ENCODE measurements at regions of chr15 and their contacts with region 1.

Region 1: GRCh38 chr15:35444557-35445204 is 101.3 kb downstream of the DPH6 start:
- DNase-seq: peak; percentile 26
- ATAC-seq: no peak
- H3K4me3 ChIP-seq: no peak overlapping the region
- H3K4me3 Mint-ChIP-seq: no peak overlapping the region
- H3K27ac ChIP-seq: no peak overlapping the region
- H3K27ac Mint-ChIP-seq: no peak overlapping the region
- H3K4me1 ChIP-seq: no peaks in the 10 kb centered on the region
- H3K4me1 Mint-ChIP-seq: no peaks in the 10 kb centered on the region
- H3K27me3 ChIP-seq: no peaks in the 10 kb centered on the region
- H3K27me3 Mint-ChIP-seq: no peaks in the 10 kb centered on the region
- CTCF ChIP-seq: peak; percentile 81

Region 2: DNA sequence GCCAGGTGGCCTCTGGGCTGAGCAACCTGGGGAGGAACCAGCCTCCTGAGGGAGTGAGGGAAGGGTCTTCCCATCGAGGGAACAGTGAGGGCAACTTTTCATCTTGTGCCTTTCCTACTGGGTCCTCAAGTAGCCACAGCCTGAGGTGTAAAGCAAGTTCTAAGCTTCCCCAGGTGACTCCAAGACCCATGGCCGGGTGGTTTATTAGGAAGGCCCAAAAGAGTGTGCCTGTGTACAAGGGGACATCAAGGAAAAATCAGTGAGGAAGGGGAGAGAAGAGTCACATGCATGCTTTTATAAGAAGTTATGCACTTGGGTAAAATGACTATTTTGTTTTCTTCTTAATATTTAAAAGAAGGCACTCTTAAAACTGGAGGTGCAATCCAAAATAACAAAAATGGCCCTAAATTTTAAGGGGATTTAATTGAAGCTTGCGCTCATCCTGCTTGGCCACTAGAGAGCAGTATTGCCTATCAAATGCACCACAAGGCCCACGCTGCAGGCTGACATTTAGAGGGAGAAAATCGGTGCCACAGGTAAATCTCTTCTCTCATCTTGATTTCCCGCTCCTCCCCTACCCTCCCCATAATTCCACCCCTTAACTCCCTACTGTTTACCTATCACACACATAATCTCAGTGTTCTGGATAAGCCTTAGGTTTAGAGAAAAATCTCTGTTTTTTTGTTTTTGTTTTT is 366.3 kb before region 1 on chr15:
- CTCF ChIA-PET with region 1: interaction called, 23 read pairs
- POLR2A ChIA-PET with region 1: no interaction called
- intact Hi-C with region 1: no loop called
- DNase-seq: peak; percentile 32
- ATAC-seq: no peak
- H3K4me3 ChIP-seq: no peak overlapping the region
- H3K4me3 Mint-ChIP-seq: no peak overlapping the region
- H3K27ac ChIP-seq: no peak overlapping the region
- H3K27ac Mint-ChIP-seq: no peak overlapping the region
- H3K4me1 ChIP-seq: no peaks in the 10 kb centered on the region
- H3K4me1 Mint-ChIP-seq: no peaks in the 10 kb centered on the region
- H3K27me3 ChIP-seq: no peaks in the 10 kb centered on the region
- H3K27me3 Mint-ChIP-seq: peaks cover 11% of the 10 kb centered on the region
- CTCF ChIP-seq: peak; percentile 80

Region 3: GRCh38 chr15:35260941-35261340 is 183.7 kb before region 1 on chr15:
- CTCF ChIA-PET with region 1: no interaction called
- POLR2A ChIA-PET with region 1: no interaction called
- intact Hi-C with region 1: no loop called
- DNase-seq: no peak
- ATAC-seq: no peak
- H3K4me3 ChIP-seq: no peak overlapping the region
- H3K4me3 Mint-ChIP-seq: no peak overlapping the region
- H3K27ac ChIP-seq: no peak overlapping the region
- H3K27ac Mint-ChIP-seq: no peak overlapping the region
- H3K4me1 ChIP-seq: no peaks in the 10 kb centered on the region
- H3K4me1 Mint-ChIP-seq: no peaks in the 10 kb centered on the region
- H3K27me3 ChIP-seq: no peaks in the 10 kb centered on the region
- H3K27me3 Mint-ChIP-seq: no peaks in the 10 kb centered on the region
- CTCF ChIP-seq: no peak

Region 4: DNA sequence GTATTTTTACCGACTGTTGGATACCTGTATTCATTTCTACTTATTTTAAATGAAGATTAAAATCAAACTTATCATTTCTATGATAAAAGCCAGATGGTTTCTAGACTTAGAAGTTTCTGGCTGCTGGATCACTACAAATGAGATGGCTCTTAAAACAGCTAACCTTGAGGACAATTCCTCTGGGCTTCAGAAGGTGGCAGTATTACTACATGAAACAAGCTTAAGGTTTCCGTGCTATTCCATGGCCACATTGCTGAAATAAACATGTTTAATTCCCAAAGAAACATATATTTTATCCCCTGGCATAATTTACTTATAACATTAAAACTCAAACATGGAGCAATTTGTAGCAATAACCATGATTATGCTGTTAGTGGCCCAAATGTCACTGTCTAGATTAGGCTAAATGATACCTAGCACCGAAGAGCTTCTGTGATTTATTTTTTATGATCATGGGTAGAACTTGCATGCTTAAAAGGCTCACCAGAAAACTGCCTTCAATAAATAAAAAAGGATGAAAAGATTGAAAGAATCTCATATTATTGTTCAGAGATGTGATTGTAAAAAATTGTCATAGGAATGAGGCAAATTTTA is 155.6 kb before region 1 on chr15:
- CTCF ChIA-PET with region 1: interaction called, 12 read pairs
- POLR2A ChIA-PET with region 1: no interaction called
- intact Hi-C with region 1: no loop called
- DNase-seq: no peak
- ATAC-seq: no peak
- H3K4me3 ChIP-seq: no peak overlapping the region
- H3K4me3 Mint-ChIP-seq: no peak overlapping the region
- H3K27ac ChIP-seq: no peak overlapping the region
- H3K27ac Mint-ChIP-seq: no peak overlapping the region
- H3K4me1 ChIP-seq: no peaks in the 10 kb centered on the region
- H3K4me1 Mint-ChIP-seq: no peaks in the 10 kb centered on the region
- H3K27me3 ChIP-seq: no peaks in the 10 kb centered on the region
- H3K27me3 Mint-ChIP-seq: no peaks in the 10 kb centered on the region
- CTCF ChIP-seq: peak; percentile 34

Region 5: DNA sequence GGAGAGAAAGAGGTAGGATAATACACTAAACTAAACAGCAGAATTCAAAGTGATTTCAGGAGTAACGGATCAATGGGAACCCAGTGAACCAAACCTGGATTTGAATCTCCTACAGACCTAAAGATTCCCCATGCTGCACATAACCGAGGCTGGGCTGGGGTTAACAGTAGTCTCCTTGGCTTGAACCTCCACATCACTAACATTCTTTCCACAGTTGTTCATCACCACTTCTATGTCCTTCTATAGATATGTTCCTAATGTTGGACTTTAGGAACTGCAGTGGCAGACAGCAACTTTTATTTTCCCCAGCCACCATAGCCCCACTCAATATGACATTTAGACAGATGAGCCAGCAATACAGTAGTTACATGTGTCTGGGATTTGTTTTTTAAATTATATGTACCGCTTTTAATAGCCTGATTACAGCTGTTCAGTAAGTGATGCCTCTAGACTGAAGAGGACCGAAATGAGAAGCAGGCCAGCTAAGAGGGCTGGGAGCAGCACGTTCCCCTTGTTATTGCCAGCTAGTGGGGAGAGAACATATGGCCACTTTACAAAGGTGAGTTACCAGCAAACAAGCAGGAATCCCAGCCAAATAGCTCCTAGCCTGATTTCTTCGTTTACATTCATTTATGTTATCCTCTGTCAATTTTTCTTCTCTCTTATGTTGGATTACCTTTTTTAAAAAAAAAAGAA is 662.1 kb after region 1 on chr15:
- CTCF ChIA-PET with region 1: no interaction called
- POLR2A ChIA-PET with region 1: no interaction called
- intact Hi-C with region 1: no loop called
- DNase-seq: no peak
- ATAC-seq: no peak
- H3K4me3 ChIP-seq: no peak overlapping the region
- H3K4me3 Mint-ChIP-seq: no peak overlapping the region
- H3K27ac ChIP-seq: no peak overlapping the region
- H3K27ac Mint-ChIP-seq: no peak overlapping the region
- H3K4me1 ChIP-seq: no peaks in the 10 kb centered on the region
- H3K4me1 Mint-ChIP-seq: no peaks in the 10 kb centered on the region
- H3K27me3 ChIP-seq: no peaks in the 10 kb centered on the region
- H3K27me3 Mint-ChIP-seq: no peaks in the 10 kb centered on the region
- CTCF ChIP-seq: no peak

Measured in B cell (primary cell).